Heart right ventricle (tissue), 16 donors: ENCODE measurements at regions of chr17 and their contacts with region 1.

Region 1: DNA sequence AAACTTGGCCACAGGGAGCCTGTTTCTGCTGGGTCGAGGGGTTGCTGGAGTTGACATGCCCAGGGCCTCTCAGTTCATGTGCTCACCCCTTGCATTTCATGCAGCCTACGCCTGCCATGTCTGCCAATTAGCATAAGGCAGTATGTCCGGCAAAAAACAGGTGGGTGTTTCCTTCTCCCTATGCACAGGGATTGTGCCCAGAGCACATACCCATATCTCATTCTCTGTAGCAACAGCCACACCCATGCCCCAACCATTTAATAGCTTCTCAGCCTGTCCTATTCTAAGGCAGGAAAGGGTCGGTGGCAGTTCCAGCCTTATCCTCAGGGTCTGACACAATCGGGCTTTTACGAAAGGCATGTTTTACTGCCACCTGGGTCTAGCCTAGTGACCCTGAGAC is 340.4 kb upstream of the ASIC2 start:
- DNase-seq: no peak
- ATAC-seq: no peak
- H3K4me3 ChIP-seq: no peak overlapping the region
- H3K27ac ChIP-seq: no peak overlapping the region
- H3K4me1 ChIP-seq: no peaks in the 10 kb centered on the region
- H3K27me3 ChIP-seq: peaks cover 0 to 15% (median 9%) of the 10 kb centered on the region in 7 donors
- CTCF ChIP-seq: no peak

Region 2: DNA sequence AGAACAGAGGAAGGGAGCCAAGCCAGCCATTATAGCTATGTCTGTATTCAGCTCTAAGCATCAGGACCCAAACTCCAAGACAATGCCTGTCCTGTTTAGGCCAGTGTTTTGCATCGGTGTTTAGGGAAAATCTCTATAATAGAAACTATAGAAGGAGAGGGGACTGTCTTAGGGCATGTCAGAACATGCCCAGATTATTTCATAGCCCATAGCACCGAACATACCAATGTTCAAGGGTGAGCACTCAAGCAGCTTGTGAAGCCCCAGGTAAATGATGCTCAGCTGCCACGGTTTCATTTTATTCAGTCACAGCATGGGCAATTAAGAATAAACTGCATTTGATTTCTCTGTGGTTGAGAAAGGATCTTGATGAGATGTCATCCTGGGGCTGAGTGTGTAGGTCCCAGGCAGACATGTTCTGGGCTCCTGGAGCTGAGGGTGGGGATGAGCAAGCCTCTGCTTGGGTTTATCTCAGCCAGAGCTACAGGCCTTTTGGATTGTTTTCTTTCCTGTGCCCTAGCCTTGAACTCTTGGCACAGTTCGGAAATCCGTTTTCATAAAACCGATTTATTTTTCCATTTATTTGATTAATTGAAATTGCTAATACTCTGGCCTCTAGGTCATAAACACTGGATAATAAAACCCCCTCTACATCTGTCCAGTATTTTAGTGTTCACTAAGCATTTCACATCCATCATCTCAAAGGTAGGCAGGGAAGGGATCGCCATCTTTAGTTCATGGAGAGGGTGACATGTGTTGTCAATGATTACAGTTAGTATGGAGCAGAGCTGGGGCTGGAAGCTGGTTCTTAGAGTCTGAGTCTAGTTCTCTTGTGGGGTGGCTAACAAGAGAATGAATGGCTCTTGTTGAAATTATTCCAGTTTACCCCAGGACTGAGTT is 49.7 kb before region 1 on chr17:
- intact Hi-C with region 1: loop called in 1 of 10 experiments (anchors 5 kb)
- DNase-seq: no peak
- ATAC-seq: no peak
- H3K4me3 ChIP-seq: no peak overlapping the region
- H3K27ac ChIP-seq: no peak overlapping the region
- H3K4me1 ChIP-seq: no peaks in the 10 kb centered on the region
- H3K27me3 ChIP-seq: peaks cover 0 to 30% (median 6%) of the 10 kb centered on the region in 7 donors
- CTCF ChIP-seq: no peak

Region 3: DNA sequence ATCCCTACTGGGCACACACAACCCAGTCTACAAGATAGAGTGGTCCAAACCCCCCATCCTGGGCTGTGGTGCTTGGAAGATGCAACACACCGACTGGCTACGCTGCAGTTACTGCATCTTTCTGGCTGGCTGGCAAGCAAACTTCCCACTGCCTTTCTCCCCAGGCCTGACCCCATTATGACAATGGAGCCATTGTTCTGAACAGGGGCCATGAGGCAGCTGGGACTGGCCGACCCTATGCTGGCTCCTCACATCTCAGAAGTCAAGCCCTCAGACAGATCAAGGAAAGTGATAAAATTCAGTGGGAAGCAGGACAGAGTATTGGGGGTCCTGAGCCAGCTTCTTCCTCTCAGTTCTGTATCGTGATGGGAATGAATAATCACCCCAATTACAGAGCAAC is 23.7 kb after region 1 on chr17:
- intact Hi-C with region 1: no loop called
- DNase-seq: no peak
- ATAC-seq: no peak
- H3K4me3 ChIP-seq: no peak overlapping the region
- H3K27ac ChIP-seq: no peak overlapping the region
- H3K4me1 ChIP-seq: peaks cover 0 to 19% (median 6%) of the 10 kb centered on the region in 9 donors
- H3K27me3 ChIP-seq: no peaks in the 10 kb centered on the region
- CTCF ChIP-seq: no peak

Region 4: GRCh38 chr17:33689725-33690124 is 56.3 kb after region 1 on chr17:
- intact Hi-C with region 1: no loop called
- DNase-seq: no peak
- ATAC-seq: no peak
- H3K4me3 ChIP-seq: no peak overlapping the region
- H3K27ac ChIP-seq: no peak overlapping the region
- H3K4me1 ChIP-seq: no peaks in the 10 kb centered on the region
- H3K27me3 ChIP-seq: peaks cover 0 to 28% (median 8%) of the 10 kb centered on the region in 7 donors
- CTCF ChIP-seq: no peak